IMR-90 (cell line): ENCODE measurements at regions of chr6 and their contacts with region 1.

Region 1: GRCh38 chr6:43143235-43144124 is 27.6 kb upstream of the SRF start:
- DNase-seq: peak; percentile 91
- ATAC-seq: peak; percentile 99
- H3K4me3 ChIP-seq: no peak overlapping the region
- H3K27ac ChIP-seq: peak overlapping the region; percentile 28
- H3K4me1 ChIP-seq: peaks cover 10% of the 10 kb centered on the region
- H3K27me3 ChIP-seq: no peaks in the 10 kb centered on the region
- CTCF ChIP-seq: peak; percentile 99
- POLR2A ChIP-seq: peak; percentile 40; the same call in 1 of the 2 replicates
- RAD21 ChIP-seq: peak; percentile 100

Region 2: DNA sequence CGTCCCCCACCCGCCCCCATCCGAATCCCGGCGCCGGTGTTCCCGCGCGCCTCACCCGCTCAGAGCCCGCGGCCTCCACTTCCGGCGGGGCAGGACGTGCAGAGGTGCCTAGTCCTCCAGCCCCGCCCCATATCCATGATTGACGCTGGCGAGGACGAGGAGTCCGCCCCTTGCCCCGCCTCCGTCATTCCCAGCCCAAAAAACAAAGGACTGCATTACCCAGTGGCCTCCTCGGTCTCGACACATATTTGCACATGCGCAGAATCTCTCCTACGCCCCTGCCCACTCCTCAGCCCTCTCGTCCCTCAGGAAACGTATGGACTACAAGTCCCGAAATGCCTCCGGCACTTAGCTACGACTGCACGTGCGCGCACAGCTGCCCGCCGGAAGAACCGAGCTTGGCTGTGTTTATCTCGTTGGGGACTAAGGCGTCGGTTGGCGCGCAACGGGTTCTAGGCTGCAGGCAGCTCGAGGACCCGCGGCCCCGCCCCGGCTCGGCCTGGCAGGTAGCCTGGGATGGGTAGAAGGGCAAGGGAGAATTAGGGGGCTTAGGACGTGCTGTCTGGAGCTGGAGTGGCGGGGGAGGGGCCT is 129.5 kb before region 1 on chr6 and contains the starts of genes KLHDC3 and MEA1:
- CTCF ChIA-PET with region 1: no interaction called
- POLR2A ChIA-PET with region 1: no interaction called
- dilution Hi-C with region 1: no loop called
- in situ Hi-C with region 1: no loop called
- intact Hi-C with region 1: loop called (anchors 2 kb)
- DNase-seq: peak; percentile 100
- ATAC-seq: peak; percentile 97
- H3K4me3 ChIP-seq: peak within 1 kb of the TSS; percentile 84
- H3K27ac ChIP-seq: peak within 1 kb of the TSS; percentile 88
- H3K4me1 ChIP-seq: peaks cover 8% of the 10 kb centered on the region
- H3K27me3 ChIP-seq: no peaks in the 10 kb centered on the region
- CTCF ChIP-seq: no peak
- POLR2A ChIP-seq: 0 out of 2 replicates have a peak, but pooled peaks have one; percentile 40
- RAD21 ChIP-seq: no peak
- total RNA-seq, gene KLHDC3: 69.7 and 76.0 TPM in 2 replicates
- total RNA-seq, gene MEA1: 116 and 119 TPM in 2 replicates

Region 3: GRCh38 chr6:43053545-43054205 is 89.8 kb before region 1 on chr6 and contains the start of gene CUL7:
- CTCF ChIA-PET with region 1: interaction called, 6 read pairs
- POLR2A ChIA-PET with region 1: no interaction called
- dilution Hi-C with region 1: no loop called
- in situ Hi-C with region 1: no loop called
- intact Hi-C with region 1: loop called (anchors 5 kb)
- DNase-seq: peak; percentile 93
- ATAC-seq: peak; percentile 95
- H3K4me3 ChIP-seq: peak within 1 kb of the TSS; percentile 68
- H3K27ac ChIP-seq: peak within 1 kb of the TSS; percentile 87
- H3K4me1 ChIP-seq: peaks cover 20% of the 10 kb centered on the region
- H3K27me3 ChIP-seq: no peaks in the 10 kb centered on the region
- CTCF ChIP-seq: 0 out of 2 replicates have a peak, but pooled peaks have one; percentile 5
- POLR2A ChIP-seq: peak; percentile 90
- RAD21 ChIP-seq: peak; percentile 4; the same call in 1 of the 2 replicates
- total RNA-seq, gene CUL7: 33.3 and 39.3 TPM in 2 replicates

Region 4: DNA sequence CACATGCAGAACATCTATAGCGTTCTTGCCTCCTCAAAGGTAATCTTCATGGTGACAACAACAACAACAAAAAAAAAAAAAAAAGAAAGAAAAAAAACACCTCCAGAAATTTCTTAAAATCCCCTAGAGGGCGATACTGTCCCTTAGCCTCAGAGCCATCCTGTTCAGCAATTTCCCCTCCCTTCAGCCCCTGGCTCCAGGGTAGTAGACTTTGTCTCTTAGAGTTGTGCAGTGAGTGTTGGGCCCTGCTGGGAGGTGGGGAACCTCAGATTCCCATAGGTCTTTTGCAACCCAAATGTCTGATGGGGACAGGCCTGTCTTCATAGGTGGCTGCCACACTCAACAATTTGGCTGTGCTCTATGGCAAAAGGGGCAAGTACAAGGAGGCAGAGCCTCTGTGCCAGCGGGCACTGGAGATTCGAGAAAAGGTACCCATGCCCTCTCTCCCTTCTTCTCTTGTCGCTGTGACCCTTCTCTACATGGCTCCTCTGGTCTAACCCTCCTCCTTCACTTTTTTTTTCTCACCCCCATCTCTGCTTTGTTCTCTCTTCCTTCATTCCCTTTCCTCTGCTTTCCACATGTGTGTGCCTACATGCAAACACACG is 73.3 kb before region 1 on chr6:
- CTCF ChIA-PET with region 1: interaction called, 7 read pairs
- POLR2A ChIA-PET with region 1: interaction called, 3 read pairs
- dilution Hi-C with region 1: no loop called
- in situ Hi-C with region 1: no loop called
- intact Hi-C with region 1: loop called (anchors 1 kb)
- DNase-seq: peak; percentile 76
- ATAC-seq: peak; percentile 89
- H3K4me3 ChIP-seq: no peak overlapping the region
- H3K27ac ChIP-seq: no peak overlapping the region
- H3K4me1 ChIP-seq: peaks cover 12% of the 10 kb centered on the region
- H3K27me3 ChIP-seq: no peaks in the 10 kb centered on the region
- CTCF ChIP-seq: peak; percentile 87
- POLR2A ChIP-seq: no peak
- RAD21 ChIP-seq: peak; percentile 90

Region 5: GRCh38 chr6:43120944-43121913 is 22.3 kb before region 1 on chr6:
- CTCF ChIA-PET with region 1: interaction called, 17 read pairs
- POLR2A ChIA-PET with region 1: no interaction called
- dilution Hi-C with region 1: no loop called
- in situ Hi-C with region 1: no loop called
- intact Hi-C with region 1: no loop called
- DNase-seq: peak; percentile 98
- ATAC-seq: peak; percentile 77
- H3K4me3 ChIP-seq: no peak overlapping the region; the same call in 1 of the 2 replicates
- H3K27ac ChIP-seq: peak overlapping the region; percentile 86
- H3K4me1 ChIP-seq: peaks cover 64% of the 10 kb centered on the region
- H3K27me3 ChIP-seq: no peaks in the 10 kb centered on the region
- CTCF ChIP-seq: peak; percentile 29
- POLR2A ChIP-seq: no peak
- RAD21 ChIP-seq: 0 out of 2 replicates have a peak, but pooled peaks have one; percentile 14